OCI-LY7 (cell line): ENCODE measurements at regions of chr1 and their contacts with region 1.

Region 1: DNA sequence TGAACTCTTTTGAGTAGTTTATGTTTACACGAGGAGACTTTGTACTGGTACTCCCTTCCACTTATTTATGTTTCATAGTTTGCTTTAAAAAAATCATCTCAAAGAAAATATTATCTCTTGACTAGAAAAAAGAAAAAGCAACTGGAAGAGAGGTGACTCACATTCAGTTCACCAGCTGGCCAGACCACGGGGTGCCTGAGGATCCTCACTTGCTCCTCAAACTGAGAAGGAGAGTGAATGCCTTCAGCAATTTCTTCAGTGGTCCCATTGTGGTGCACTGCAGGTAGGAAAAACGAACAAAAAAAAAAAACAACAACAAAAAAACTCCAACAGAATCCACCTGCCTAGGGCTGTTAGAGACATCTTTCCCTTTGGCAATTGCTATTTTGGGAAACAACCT is 102.9 kb downstream of the PTPRC start:
- DNase-seq: no peak
- H3K4me3 ChIP-seq: no peak overlapping the region
- H3K27ac ChIP-seq: no peak overlapping the region
- H3K4me1 ChIP-seq: no peaks in the 10 kb centered on the region
- CTCF ChIP-seq: no peak

Region 2: GRCh38 chr1:198756470-198756869 is 14.7 kb after region 1 on chr1:
- CTCF ChIA-PET with region 1: no interaction called
- POLR2A ChIA-PET with region 1: interaction called, 35 read pairs
- intact Hi-C with region 1: loop called (anchors 1 kb)
- DNase-seq: no peak
- H3K4me3 ChIP-seq: no peak overlapping the region
- H3K27ac ChIP-seq: no peak overlapping the region
- H3K4me1 ChIP-seq: no peaks in the 10 kb centered on the region
- CTCF ChIP-seq: peak; percentile 45; the same call in 1 of the 2 replicates